Panc1 (cell line): ENCODE measurements at regions of chr2 and their contacts with region 1.

Region 1: DNA sequence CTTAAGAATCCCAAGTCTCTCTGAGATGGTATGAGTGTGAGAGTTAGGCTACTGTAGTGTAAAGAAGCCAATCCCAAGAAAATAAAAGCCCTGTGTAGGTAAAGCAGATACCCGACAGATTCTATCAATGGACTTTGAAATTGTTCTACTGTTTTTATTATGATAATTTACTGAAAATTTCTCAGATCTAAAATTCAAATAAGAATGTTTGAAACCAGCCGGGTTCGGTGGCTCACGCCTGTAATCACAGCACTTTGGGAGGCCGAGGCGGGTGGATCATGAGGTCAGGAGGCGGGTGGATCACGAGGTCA is 208.3 kb upstream of the SPRED2 start:
- DNase-seq: no peak
- ATAC-seq: no peak
- H3K4me3 ChIP-seq: 0 out of 4 replicates have a peak overlapping the region, but pooled peaks of 1 of the 2 experiments have one; percentile 24
- H3K27ac ChIP-seq: no peak overlapping the region
- H3K4me1 ChIP-seq: peaks cover 6% of the 10 kb centered on the region; the same call in 1 of the 2 replicates
- H3K27me3 ChIP-seq: peaks cover 31% of the 10 kb centered on the region
- CTCF ChIP-seq: peak; percentile 62

Region 2: GRCh38 chr2:65710779-65711295 is 70.1 kb after region 1 on chr2:
- CTCF ChIA-PET with region 1: no interaction called
- POLR2A ChIA-PET with region 1: no interaction called
- in situ Hi-C with region 1: no loop called
- intact Hi-C with region 1: loop called (anchors 2 kb)
- DNase-seq: no peak
- ATAC-seq: 0 out of 2 replicates have a peak, but pooled peaks have one; percentile 75
- H3K4me3 ChIP-seq: no peak overlapping the region
- H3K27ac ChIP-seq: no peak overlapping the region
- H3K4me1 ChIP-seq: no peaks in the 10 kb centered on the region
- H3K27me3 ChIP-seq: peaks cover 3% of the 10 kb centered on the region; the same call in 1 of the 2 replicates
- CTCF ChIP-seq: peak; percentile 62